ENCODE measurements at regions of chr22 and their contacts with region 1.

Region 1: GRCh38 chr22:31128156-31128555 is 5.4 kb downstream of the INPP5J start:
- DNase-seq: no peak
- H3K4me3 ChIP-seq: no peak overlapping the region
- H3K27ac ChIP-seq: no peak overlapping the region
- H3K4me1 ChIP-seq: peaks cover 21% of the 10 kb centered on the region
- H3K27me3 ChIP-seq: peaks cover 16% of the 10 kb centered on the region; the same call in 1 of the 2 replicates
- CTCF ChIP-seq: no peak

Region 2: DNA sequence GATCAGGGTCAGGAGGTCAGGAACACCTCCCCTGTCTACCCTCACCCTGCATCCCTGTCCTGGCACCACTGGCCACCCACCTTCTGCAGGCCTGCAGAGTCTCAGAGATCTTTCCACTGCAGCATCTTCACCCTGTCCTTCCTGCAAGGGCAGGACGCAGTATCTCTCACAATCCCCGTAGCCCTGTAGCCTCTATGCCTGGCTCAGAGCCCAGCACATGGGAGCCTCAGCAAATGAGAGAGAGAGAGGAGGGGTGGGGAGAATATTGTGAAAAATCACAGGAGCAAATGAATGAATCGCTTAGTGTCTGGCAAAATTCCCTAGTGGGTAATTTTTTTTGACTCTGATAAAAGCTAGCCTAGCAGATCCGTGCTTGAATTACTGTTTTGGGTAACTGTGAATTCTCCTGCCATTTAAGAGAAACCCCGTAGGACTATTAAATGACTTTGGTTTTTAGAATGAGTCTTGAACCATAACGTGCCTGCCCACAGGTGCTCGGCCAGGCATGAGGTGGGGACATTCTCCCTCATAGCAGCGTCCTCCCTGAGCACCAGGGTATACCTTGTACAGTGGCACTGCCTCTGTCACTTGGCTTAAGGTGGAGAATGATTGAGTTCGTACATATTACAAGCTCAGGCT is 251.1 kb before region 1 on chr22:
- CTCF ChIA-PET with region 1: no interaction called
- POLR2A ChIA-PET with region 1: no interaction called
- intact Hi-C with region 1: no loop called
- DNase-seq: no peak
- H3K4me3 ChIP-seq: no peak overlapping the region
- H3K27ac ChIP-seq: no peak overlapping the region
- H3K4me1 ChIP-seq: peaks cover 14% of the 10 kb centered on the region
- H3K27me3 ChIP-seq: no peaks in the 10 kb centered on the region
- CTCF ChIP-seq: no peak

Region 3: DNA sequence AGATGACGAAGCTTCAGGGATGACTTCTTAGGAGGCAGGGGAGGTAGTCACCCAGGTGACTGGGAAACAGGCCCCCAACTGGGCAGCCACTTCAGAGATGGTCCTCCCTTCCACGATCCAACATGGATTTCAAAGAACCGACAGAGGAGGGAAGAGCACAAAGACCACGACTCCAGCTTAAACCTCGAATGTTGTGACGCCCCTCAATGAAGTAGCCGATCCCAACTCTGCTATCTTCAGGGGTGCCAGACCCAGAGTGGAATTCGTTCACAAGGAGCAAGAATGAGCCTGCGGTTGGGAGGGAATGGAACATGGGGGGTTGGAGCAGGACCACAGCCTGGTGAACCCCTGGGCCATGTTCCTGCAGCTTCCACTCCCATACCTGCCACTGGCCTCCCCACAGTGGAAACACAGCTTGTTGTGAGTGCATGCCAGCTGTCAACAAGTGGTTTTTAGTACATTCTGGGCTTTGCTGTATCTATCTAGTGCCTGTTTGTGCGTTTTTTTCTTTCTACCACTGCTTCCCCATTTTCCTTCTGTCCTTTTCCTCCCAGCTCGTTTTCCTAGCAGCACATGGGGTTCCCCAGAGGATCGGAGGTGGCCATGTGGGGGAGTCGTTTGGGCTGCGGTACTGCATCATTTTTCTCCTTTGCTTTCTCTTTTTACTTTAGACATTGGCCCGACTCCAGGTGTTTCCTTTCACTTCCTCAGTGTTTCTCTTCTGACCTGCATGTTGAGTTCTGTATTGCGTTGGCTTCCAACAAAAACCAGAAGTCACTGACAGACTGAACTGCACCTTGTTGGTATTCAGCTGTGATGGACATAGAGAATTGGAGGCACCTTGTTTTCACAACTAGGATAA is 225.4 kb before region 1 on chr22:
- CTCF ChIA-PET with region 1: no interaction called
- POLR2A ChIA-PET with region 1: no interaction called
- intact Hi-C with region 1: no loop called
- DNase-seq: no peak
- H3K4me3 ChIP-seq: no peak overlapping the region
- H3K27ac ChIP-seq: no peak overlapping the region
- H3K4me1 ChIP-seq: no peaks in the 10 kb centered on the region
- H3K27me3 ChIP-seq: no peaks in the 10 kb centered on the region
- CTCF ChIP-seq: no peak

Region 4: DNA sequence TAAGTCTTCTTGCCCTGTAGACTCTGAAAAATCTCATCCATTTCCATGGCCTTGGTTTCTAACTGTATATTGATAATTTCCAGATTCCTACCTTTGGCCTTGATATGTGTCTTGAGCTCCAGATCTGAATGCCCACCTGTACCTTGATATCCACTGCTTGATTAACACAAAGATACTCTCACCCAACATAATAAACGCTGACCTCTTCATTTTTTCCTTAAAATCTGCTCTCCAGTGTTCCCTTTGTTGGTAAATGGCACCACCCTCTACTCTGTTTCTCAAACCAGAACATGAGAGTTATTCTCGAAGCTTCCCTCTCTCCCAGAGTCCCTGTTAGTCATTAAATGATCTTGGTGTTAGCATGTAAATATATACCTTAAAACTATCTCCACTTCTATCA is 145.7 kb before region 1 on chr22:
- CTCF ChIA-PET with region 1: interaction called, 10 read pairs
- POLR2A ChIA-PET with region 1: no interaction called
- intact Hi-C with region 1: no loop called
- DNase-seq: no peak
- H3K4me3 ChIP-seq: no peak overlapping the region
- H3K27ac ChIP-seq: no peak overlapping the region
- H3K4me1 ChIP-seq: no peaks in the 10 kb centered on the region
- H3K27me3 ChIP-seq: no peaks in the 10 kb centered on the region
- CTCF ChIP-seq: no peak

Region 5: DNA sequence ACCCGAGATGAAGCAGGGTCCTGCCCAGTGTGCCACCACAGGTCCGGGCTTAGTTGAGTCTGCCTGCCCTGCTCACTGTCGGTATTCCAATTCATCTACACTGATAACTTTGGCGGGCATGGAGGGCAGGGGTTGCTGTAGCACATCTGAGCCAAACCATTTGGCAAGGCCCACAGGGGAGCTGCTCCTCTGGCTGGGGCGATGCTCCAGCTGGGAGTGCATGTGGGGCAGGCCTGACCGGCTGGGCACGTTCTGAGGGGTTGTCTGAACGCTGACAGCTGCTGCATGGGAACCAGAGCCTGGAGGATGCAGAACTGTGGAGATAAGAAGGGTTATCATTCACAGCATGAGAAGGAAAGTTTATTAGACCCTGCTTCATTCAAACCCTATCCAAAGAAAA is 311.7 kb after region 1 on chr22:
- CTCF ChIA-PET with region 1: no interaction called
- POLR2A ChIA-PET with region 1: no interaction called
- intact Hi-C with region 1: no loop called
- DNase-seq: no peak
- H3K4me3 ChIP-seq: no peak overlapping the region
- H3K27ac ChIP-seq: no peak overlapping the region
- H3K4me1 ChIP-seq: no peaks in the 10 kb centered on the region
- H3K27me3 ChIP-seq: no peaks in the 10 kb centered on the region
- CTCF ChIP-seq: no peak